HCT116 (cell line): ENCODE measurements at regions of chrX and their contacts with region 1.

Region 1: DNA sequence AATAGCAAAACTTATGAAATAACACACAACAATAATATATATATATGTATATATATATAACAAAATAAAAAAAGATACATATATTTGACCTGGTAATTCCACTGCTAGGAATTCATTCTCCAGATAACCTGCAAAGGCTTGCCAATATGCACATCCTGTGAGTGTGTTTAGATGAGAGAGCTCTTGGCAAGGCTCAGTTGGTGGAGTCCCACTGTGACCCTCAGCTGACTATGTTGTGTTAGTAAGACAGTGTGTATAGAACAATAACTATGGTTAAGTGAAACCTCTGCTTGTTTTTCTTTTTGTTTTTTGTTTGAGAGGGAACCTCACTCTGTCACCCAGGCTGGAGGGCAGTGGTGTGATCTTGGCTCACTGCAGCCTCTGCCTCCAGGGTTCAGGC is 39.5 kb upstream of the RBMX start:
- DNase-seq: no peak
- ATAC-seq: no peak
- H3K4me3 ChIP-seq: no peak overlapping the region
- H3K27ac ChIP-seq: no peak overlapping the region
- H3K4me1 ChIP-seq: no peaks in the 10 kb centered on the region
- H3K27me3 ChIP-seq: no peaks in the 10 kb centered on the region
- CTCF ChIP-seq: no peak
- POLR2A ChIP-seq: no peak
- RAD21 ChIP-seq: no peak

Region 2: DNA sequence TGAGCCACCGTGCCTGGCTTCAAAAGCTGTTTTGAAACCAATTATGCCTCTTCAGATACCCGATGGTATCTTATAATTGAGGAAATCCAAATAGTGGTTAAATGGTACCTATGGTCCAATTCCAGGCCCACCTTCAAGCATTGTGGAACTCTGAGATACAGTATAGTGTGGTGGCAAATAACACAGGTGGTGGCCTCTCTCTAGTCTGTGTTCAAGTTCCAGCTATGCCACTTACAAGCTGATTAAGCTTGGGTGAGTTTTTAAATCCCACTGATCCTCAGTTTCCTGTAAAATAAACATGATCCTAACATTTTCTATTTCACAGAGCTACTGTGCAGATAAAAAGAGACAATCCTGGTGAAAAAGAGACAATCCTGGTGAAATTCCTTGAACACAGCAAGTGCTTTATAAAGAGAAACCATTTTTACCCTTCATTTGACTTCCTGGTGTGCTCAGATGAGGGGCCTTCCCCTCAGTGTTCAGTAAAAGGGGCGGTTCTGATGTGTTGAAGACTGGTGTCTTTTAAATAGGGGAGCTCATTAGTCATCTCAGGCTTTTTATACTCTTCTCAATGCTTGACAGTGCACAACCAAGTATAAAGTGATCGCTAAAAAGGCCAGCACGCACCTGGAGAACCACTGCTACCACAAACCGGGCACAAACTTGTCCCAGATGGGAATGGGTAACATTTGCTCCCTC is 302.9 kb before region 1 on chrX:
- CTCF ChIA-PET with region 1: no interaction called
- POLR2A ChIA-PET with region 1: no interaction called
- RAD21 ChIA-PET with region 1: no interaction called
- intact Hi-C with region 1: loop called (anchors 10 kb)
- DNase-seq: no peak
- ATAC-seq: no peak
- H3K4me3 ChIP-seq: no peak overlapping the region
- H3K27ac ChIP-seq: no peak overlapping the region
- H3K4me1 ChIP-seq: no peaks in the 10 kb centered on the region
- H3K27me3 ChIP-seq: no peaks in the 10 kb centered on the region
- CTCF ChIP-seq: no peak
- POLR2A ChIP-seq: no peak
- RAD21 ChIP-seq: no peak

Region 3: GRCh38 chrX:136711147-136711546 is 208.9 kb before region 1 on chrX:
- CTCF ChIA-PET with region 1: interaction called, 5 read pairs
- POLR2A ChIA-PET with region 1: no interaction called
- RAD21 ChIA-PET with region 1: no interaction called
- intact Hi-C with region 1: loop called (anchors 1 kb)
- DNase-seq: no peak
- ATAC-seq: peak; percentile 77
- H3K4me3 ChIP-seq: no peak overlapping the region
- H3K27ac ChIP-seq: no peak overlapping the region
- H3K4me1 ChIP-seq: no peaks in the 10 kb centered on the region
- H3K27me3 ChIP-seq: no peaks in the 10 kb centered on the region
- CTCF ChIP-seq: peak; percentile 20 to 50 (median 30); a peak in 4 of 6 replicates
- POLR2A ChIP-seq: no peak
- RAD21 ChIP-seq: peak; percentile 76